ENCODE measurements at regions of chr1 and their contacts with region 1.

Region 1: GRCh38 chr1:69459244-69459643 is 108.5 kb upstream of the LRRC7 start:
- DNase-seq: no peak
- ATAC-seq: peak; percentile 64; the same call in 1 of the 3 replicates
- H3K4me3 ChIP-seq: no peak overlapping the region
- H3K27ac ChIP-seq: no peak overlapping the region
- H3K4me1 ChIP-seq: no peaks in the 10 kb centered on the region
- H3K27me3 ChIP-seq: no peaks in the 10 kb centered on the region
- CTCF ChIP-seq: peak in 2 of 3 experiments; percentile 15 to 28; a peak in 3 of 6 replicates
- EP300 ChIP-seq: no peak
- POLR2A ChIP-seq: no peak
- RAD21 ChIP-seq: peak in 1 of 2 experiments; percentile 55; a peak in 2 of 4 replicates

Region 2: DNA sequence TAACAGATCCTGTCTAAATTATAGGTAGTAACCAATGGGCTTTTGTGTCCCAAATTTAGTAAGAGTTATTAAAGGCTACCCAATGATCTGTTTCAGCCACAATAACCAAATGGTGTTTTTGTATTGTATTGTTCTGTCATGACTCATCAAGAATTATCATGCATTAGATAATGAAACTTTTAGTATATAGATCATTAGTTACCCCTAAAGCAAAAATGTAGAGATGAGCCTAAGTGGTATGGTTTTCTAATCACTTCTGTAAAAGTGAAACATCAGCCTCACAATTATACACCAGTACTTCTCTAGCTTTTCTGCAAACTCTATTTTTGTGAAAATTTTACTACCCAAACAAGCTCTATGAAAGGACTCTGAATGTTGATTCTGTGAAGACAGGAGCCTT is 179.9 kb after region 1 on chr1:
- CTCF ChIA-PET with region 1: no interaction called
- POLR2A ChIA-PET with region 1: no interaction called
- in situ Hi-C with region 1: no loop called
- intact Hi-C with region 1: loop called (anchors 10 kb)
- DNase-seq: no peak
- ATAC-seq: no peak
- H3K4me3 ChIP-seq: no peak overlapping the region
- H3K27ac ChIP-seq: no peak overlapping the region
- H3K4me1 ChIP-seq: no peaks in the 10 kb centered on the region; a peak in 1 of 5 replicates
- H3K27me3 ChIP-seq: no peaks in the 10 kb centered on the region
- CTCF ChIP-seq: no peak
- EP300 ChIP-seq: no peak
- POLR2A ChIP-seq: no peak
- RAD21 ChIP-seq: no peak

Measured in K562 (cell line).